ENCODE measurements at regions of chr10 and their contacts with region 1.

Region 1: DNA sequence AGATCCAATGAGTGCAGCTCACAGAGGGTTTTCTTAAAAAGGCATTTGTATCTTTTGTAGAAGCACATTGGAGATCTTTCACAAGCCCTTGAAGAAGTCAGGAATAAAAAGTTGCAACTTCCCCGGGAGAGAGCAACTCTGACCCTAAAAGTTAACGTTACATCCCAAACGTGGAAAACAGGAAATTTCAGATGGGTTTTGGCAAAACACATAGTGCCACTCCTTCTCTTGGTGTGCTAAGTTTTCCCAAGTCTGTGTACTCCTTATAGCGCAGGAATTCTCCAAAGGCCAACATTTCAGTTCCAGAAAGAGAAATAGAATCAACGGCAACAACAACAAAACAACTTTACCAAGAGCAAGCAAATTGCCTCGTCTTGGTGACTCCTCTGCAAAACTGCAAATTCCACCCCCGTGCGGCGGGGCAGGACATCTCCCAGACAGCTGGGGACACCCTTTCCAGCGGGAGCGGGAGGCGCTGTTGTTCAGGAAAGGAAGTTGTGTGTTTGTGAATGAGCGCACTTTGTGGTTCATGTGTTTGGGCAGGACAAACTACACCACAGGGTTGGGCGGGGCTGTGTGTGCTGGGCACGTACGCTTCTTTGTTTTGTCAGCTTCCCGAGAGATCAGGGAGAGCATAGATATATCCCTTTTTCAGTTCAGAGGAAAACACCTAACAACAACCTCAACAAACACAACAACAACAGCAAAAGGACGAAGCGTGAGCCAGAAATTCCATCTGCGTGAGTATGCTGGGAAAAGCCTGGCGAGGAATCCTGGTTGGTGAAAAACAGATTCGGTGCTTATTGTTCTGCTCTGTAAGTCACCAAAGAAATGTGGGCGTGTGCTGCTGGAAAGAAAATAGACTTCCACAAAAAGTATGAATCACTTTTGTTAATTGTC is 294.7 kb upstream of the PITRM1 start:
- DNase-seq: peak; percentile 99
- H3K4me3 ChIP-seq: peak overlapping the region in 1 of 3 experiments; percentile 45
- H3K27ac ChIP-seq: peak overlapping the region; percentile 100
- H3K4me1 ChIP-seq: peaks cover 44% of the 10 kb centered on the region
- H3K27me3 ChIP-seq: no peaks in the 10 kb centered on the region
- CTCF ChIP-seq: peak; percentile 63 to 71
- POLR2A ChIP-seq: peak; percentile 18

Region 2: DNA sequence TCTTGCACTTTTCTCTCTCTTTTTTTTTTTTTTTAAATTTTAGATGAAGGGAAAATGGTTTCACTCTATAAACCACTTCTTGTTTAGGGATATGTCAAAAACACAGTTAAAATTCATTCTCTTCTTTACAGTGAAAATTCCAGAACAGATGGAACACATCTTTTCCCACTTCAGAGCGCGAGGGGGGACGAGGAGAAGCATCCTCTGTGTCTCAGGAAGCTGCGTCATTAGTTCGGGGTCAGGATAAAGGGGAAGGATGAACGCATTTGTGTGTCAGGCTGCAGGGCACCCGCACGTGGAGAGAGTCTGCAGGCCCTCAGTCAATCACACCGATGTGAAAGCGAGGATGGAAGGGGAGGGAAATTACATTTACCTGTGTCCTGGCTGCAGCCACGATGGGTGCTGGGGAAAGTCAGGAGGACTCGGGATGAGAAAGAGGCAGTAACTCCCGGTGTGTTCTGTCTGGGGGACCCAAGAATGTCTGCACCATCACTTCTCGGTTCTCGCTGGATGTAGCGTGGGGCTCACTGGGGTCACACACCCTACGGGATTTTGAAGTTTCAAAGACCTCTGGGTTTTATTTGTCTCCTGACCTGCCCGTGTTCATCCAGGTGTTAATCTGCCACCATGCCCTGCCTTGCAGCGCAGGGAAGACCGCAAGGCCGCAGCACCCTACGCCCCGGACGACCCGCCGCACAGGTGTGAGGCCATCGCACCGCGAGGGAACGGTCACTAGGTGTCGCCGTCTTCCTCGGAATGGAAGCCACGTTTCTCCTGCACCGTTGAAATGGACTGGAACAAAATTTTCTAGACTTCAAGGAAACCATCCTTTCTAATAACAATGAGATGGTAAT is 228.0 kb before region 1 on chr10:
- CTCF ChIA-PET with region 1: interaction called, 3 read pairs
- POLR2A ChIA-PET with region 1: no interaction called
- dilution Hi-C with region 1: no loop called
- intact Hi-C with region 1: loop called (anchors 1 kb)
- DNase-seq: peak; percentile 78
- H3K4me3 ChIP-seq: no peak overlapping the region
- H3K27ac ChIP-seq: peak overlapping the region; percentile 80
- H3K4me1 ChIP-seq: peaks cover 11% of the 10 kb centered on the region
- H3K27me3 ChIP-seq: no peaks in the 10 kb centered on the region
- CTCF ChIP-seq: peak; percentile 86 to 87
- POLR2A ChIP-seq: no peak

Region 3: GRCh38 chr10:3435671-3436070 is 31.6 kb before region 1 on chr10:
- CTCF ChIA-PET with region 1: interaction called, 3 read pairs
- POLR2A ChIA-PET with region 1: no interaction called
- dilution Hi-C with region 1: no loop called
- intact Hi-C with region 1: loop called (anchors 1 kb)
- DNase-seq: peak; percentile 93
- H3K4me3 ChIP-seq: no peak overlapping the region
- H3K27ac ChIP-seq: peak overlapping the region; percentile 19
- H3K4me1 ChIP-seq: peaks cover 13% of the 10 kb centered on the region
- H3K27me3 ChIP-seq: no peaks in the 10 kb centered on the region
- CTCF ChIP-seq: no peak
- POLR2A ChIP-seq: no peak

Region 4: GRCh38 chr10:3776796-3777571 is 309.7 kb after region 1 on chr10:
- CTCF ChIA-PET with region 1: no interaction called
- POLR2A ChIA-PET with region 1: no interaction called
- dilution Hi-C with region 1: no loop called
- intact Hi-C with region 1: loop called (anchors 1 kb)
- DNase-seq: peak; percentile 78
- H3K4me3 ChIP-seq: no peak overlapping the region
- H3K27ac ChIP-seq: peak overlapping the region; percentile 36
- H3K4me1 ChIP-seq: peaks cover 55% of the 10 kb centered on the region
- H3K27me3 ChIP-seq: no peaks in the 10 kb centered on the region
- CTCF ChIP-seq: no peak
- POLR2A ChIP-seq: peak; percentile 37

Region 5: GRCh38 chr10:3924344-3924743 is 457.0 kb after region 1 on chr10:
- CTCF ChIA-PET with region 1: no interaction called
- POLR2A ChIA-PET with region 1: no interaction called
- dilution Hi-C with region 1: no loop called
- intact Hi-C with region 1: loop called (anchors 5 kb)
- DNase-seq: peak; percentile 98
- H3K4me3 ChIP-seq: no peak overlapping the region
- H3K27ac ChIP-seq: peak overlapping the region; percentile 99
- H3K4me1 ChIP-seq: peaks cover 29% of the 10 kb centered on the region
- H3K27me3 ChIP-seq: no peaks in the 10 kb centered on the region
- CTCF ChIP-seq: no peak
- POLR2A ChIP-seq: peak; percentile 32

Region 6: DNA sequence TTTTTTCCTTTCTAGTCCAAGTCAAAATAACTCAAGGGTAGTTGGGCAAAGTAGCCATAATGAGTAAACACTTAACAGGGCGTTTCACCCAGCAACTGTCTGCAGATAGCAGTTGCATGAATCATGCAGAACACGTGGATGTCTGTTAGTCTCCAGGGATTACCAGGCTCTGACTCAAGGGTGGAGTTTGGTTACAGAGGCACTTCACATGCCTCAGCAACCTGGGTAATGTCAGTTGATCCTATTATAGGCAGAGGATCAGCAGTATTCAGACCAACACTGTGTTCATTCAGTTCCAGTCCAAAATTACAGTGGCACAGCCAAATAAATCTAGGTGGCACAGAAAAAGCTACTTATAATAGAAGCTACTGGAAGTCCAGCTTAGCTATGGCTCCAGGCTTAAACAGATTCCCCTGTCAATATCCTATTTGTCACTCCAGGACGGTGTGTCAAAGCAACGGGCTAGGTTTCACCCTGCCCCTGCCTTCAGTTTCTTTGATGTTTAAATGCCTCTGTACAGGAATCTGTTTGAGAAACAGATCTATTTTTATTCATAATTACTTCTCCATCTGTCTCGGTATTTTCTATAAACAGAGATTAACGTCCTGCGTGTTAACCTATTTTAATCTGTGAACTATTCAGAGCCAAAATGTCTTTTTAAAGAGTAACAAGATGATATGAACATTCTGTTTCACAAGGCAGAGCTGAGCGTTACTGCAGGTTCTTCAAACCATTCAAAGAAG is 1196.0 kb after region 1 on chr10:
- CTCF ChIA-PET with region 1: no interaction called
- POLR2A ChIA-PET with region 1: no interaction called
- dilution Hi-C with region 1: no loop called
- intact Hi-C with region 1: loop called (anchors 5 kb)
- DNase-seq: peak; percentile 97
- H3K4me3 ChIP-seq: no peak overlapping the region
- H3K27ac ChIP-seq: peak overlapping the region; percentile 97
- H3K4me1 ChIP-seq: peaks cover 23% of the 10 kb centered on the region
- H3K27me3 ChIP-seq: no peaks in the 10 kb centered on the region
- CTCF ChIP-seq: no peak
- POLR2A ChIP-seq: peak; percentile 65